ENCODE measurements at regions of chr2 and their contacts with region 1.

Region 1: DNA sequence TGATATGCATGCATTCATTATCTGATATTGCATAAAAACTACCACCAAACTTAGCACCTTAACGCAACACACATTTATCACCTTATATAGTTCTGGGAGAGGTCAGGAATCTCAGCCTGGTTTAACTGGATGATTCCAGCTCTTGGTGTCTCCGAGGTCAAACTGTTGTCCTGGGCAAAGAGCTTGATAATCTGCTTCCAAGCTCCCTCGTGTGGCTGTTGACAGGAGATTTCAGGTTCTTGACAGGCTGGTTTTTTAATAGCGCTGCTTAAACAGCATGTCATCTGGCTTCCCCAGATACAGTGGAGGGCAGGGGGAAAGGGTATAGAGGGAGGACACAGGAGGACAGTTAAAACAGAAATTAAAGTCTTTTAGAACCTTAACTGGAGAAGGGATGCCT is 785.0 kb downstream of the CNTNAP5 start:
- DNase-seq: no peak
- ATAC-seq: peak; percentile 86

Region 2: GRCh38 chr2:124027182-124027581 is 783.0 kb before region 1 on chr2:
- intact Hi-C with region 1: loop called (anchors 5 kb)
- DNase-seq: no peak
- ATAC-seq: peak; percentile 63

Region 3: DNA sequence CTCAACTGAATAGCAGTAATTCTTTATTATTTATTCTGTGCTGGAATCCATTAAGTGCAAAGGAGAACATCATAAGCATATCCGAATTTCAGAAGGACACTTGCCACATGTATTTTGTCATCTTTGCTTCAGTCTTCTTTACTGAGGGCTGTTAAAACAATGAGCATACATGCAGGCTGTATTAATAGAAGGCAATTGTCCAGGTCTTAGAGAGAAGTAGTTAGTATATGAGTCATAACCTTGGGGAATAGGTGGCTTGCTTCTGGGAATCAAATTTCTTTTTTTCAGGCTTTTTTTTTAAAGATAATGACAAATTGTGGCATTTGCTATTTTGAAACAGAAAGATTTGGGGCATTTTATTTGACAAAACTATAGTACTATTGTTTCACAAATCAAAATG is 11.6 kb before region 1 on chr2:
- intact Hi-C with region 1: no loop called
- DNase-seq: no peak
- ATAC-seq: no peak

Measured in Right ventricle myocardium superior (tissue), 1 donor.